ENCODE measurements at regions of chr2 and their contacts with region 1.

Region 1: GRCh38 chr2:74833418-74834233 is at the start of gene HK2:
- DNase-seq: peak; percentile 78
- H3K4me3 Mint-ChIP-seq: peak within 1 kb of the TSS; percentile 94
- H3K27ac Mint-ChIP-seq: peak within 1 kb of the TSS; percentile 86
- H3K4me1 Mint-ChIP-seq: peaks cover 41% of the 10 kb centered on the region
- H3K27me3 Mint-ChIP-seq: no peaks in the 10 kb centered on the region
- total RNA-seq, gene HK2: 37.9 to 38.7 TPM

Region 2: GRCh38 chr2:73284296-73285158 is 1549.1 kb before region 1 on chr2 and contains the start of gene FBXO41:
- CTCF ChIA-PET with region 1: no interaction called
- intact Hi-C with region 1: loop called (anchors 10 kb)
- DNase-seq: peak; percentile 65
- H3K4me3 Mint-ChIP-seq: peak within 1 kb of the TSS; percentile 80
- H3K27ac Mint-ChIP-seq: peak within 1 kb of the TSS; percentile 53
- H3K4me1 Mint-ChIP-seq: peaks cover 11% of the 10 kb centered on the region
- H3K27me3 Mint-ChIP-seq: peaks cover 14% of the 10 kb centered on the region
- total RNA-seq, gene FBXO41: 11.0 to 11.8 TPM

Region 3: DNA sequence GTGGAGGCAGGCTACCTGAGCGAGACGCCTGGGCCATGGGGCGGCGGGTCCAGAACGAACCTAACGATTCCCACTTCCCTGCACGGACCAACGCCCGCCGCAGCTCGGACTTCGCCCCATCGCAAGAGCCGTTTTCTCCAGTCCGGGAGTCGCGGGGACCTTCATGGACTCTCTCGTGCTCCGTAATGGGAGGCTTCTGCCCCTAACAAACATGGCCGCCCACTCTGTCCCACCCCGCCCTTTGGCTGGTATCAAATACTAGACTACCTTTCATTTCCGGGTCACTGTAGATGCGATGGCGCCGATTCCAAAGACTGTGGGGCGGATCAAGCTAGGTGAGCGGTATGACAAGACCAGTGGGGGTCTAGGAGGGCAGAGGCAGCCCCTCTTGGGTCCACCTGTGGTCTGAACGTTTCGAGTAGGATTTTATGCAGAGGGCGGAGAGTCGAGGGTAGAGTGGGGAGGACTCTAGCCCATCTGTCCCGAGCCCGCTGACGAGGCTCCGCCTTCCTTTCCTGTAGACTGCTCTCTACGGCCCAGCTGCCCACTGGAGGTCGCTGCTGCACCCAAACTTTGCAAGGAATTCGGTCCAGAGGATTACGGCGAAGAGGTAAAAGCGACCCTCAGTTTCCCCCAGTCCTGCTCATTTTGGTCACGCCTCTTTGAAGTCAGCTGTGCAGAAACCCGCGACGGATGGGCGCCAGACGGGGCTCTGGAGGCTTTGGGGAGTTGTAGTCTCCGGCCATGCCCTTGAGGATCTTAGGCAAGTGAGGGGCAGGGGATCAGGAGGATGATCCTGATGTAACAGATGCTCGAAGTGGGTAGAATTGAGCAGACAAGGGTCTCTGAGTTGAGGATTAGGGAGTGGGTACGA is 350.6 kb before region 1 on chr2 and contains the starts of genes CCDC142 and TTC31:
- CTCF ChIA-PET with region 1: no interaction called
- intact Hi-C with region 1: loop called (anchors 2 kb)
- DNase-seq: peak; percentile 97
- H3K4me3 Mint-ChIP-seq: peak within 1 kb of the TSS; percentile 93
- H3K27ac Mint-ChIP-seq: peak within 1 kb of the TSS; percentile 98
- H3K4me1 Mint-ChIP-seq: peaks cover 32% of the 10 kb centered on the region
- H3K27me3 Mint-ChIP-seq: no peaks in the 10 kb centered on the region
- total RNA-seq, gene CCDC142: 3.7 to 5.8 TPM
- total RNA-seq, gene TTC31: 29.5 to 30.6 TPM

Region 4: DNA sequence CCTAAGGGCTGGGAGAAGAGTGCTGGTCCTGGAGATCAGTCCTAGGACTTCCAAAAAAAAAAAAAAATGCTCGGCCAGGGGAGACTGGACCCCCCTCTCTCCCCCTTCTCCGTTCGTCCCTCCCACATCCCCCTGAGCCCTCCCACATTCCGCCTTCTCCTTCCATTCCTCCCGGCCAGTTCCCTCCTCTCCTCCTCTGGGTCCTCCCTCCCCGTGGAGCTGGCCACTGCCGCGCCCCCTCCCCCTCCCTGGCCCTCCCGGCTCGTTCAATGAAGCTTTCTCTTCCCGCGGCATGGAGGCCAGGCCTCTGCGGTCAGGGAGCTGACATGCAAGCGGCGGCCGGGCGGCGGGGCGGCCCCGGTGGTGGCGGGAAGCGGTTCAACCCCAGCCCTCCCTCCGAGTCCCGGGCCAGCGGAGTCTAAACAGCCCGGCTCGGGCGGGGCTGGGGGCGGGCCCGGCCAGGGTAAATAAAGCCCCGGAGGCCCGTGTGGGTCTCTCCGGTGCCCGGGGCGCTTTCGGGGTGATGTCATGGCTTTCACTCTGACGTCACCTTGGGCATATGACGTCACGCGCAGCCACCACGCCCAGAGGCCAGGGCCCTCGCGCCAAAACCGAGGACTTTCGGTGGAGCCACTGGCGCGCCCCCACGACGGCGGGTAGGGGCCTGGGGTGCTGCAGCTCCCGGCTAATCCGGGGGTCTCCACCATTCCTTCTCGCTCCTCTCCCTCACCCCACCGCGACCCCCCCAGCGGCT is 279.6 kb before region 1 on chr2 and contains the start of gene LOXL3:
- CTCF ChIA-PET with region 1: no interaction called
- intact Hi-C with region 1: loop called (anchors 2 kb)
- DNase-seq: peak; percentile 82
- H3K4me3 Mint-ChIP-seq: peak within 1 kb of the TSS; percentile 94
- H3K27ac Mint-ChIP-seq: peak within 1 kb of the TSS; percentile 88
- H3K4me1 Mint-ChIP-seq: peaks cover 4% of the 10 kb centered on the region
- H3K27me3 Mint-ChIP-seq: peaks cover 17% of the 10 kb centered on the region
- total RNA-seq, gene LOXL3: 0.35 to 0.41 TPM

Region 5: DNA sequence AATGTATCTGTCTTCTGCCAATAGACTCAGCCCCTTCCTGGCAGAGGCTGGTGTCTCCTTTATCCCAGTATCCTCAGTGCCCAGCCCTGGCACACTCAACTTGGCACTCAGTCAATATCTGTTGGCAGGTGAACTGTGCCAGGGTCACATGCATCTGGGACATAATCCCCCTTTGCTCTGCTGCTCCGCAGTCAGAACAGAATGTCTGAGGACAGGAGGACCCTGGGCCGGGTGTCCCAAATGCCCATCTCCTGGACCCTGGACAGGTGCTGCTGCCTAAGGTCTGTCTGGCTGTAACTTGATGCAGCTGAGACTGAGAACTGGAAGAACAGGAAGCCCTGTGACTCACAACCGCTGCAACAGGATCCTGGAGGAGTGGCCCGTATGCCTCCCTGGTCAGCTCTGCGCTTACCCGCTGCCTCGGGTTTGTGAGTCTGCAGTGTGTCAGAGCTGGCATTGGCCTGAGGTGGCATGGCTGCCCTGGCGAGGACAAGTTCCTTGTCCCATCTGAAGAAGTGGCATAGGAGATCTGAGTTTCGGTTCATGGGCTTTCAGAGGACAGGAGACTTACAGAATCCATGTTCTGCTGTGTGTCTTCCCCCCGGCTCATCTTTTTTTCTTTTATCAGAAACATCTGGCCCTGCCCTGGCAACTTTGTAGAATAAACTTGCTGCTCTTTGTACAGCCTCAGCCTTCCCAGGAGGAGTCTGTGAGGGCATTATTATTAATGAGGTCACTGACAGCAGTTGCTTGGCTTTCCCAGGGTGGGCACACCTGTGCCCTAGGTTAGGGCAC is 11.8 kb after region 1 on chr2:
- CTCF ChIA-PET with region 1: interaction called, 14 read pairs
- intact Hi-C with region 1: loop called (anchors 1 kb)
- DNase-seq: peak; percentile 61
- H3K4me3 Mint-ChIP-seq: no peak overlapping the region
- H3K27ac Mint-ChIP-seq: peak overlapping the region; percentile 33
- H3K4me1 Mint-ChIP-seq: peaks cover 95% of the 10 kb centered on the region
- H3K27me3 Mint-ChIP-seq: no peaks in the 10 kb centered on the region

Region 6: DNA sequence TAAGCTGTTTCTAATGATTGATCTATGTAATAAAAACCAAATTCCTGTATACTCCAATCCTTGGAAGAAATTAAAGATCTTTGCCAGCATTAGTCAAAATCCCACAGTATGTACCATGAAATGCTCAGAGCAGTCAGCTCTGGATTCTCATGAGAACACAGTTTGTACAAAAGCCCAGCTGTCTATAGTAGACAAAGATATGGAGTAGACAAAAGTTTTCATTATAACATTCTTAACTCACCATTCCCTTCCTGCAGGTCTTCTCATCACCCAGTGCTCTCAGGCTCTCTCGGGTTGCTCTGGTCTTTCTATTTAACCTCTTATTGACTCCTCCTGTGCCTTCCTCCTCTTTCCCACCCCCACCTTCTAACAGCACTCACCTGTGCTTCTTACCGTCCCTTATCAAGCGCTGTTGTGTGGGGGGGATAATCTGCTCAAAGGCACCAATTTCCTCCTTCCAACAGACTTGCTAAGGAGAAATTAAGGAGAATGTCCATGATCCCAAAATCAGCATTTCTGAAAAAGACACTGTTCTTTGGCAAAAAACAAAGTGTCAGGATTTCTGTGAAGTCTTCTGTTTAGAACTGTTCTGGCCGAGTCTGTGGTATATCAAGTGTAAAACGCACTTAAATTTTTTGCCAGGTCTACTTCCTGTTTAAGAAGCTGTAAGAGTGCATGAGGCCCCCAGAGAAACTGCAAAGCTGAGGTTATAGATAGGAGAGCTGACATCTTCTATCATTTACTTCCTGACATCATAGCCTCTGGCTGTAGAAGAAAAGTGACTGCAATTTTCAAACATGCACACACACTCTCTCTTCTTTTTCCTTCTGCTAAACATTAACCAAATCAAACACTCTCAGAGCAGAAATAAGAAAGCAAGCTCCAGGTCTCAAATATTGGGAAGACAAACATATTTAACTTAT is 583.1 kb after region 1 on chr2:
- CTCF ChIA-PET with region 1: no interaction called
- intact Hi-C with region 1: loop called (anchors 10 kb)
- DNase-seq: peak; percentile 14
- H3K4me3 Mint-ChIP-seq: peak overlapping the region; percentile 74
- H3K27ac Mint-ChIP-seq: peak overlapping the region; percentile 71
- H3K4me1 Mint-ChIP-seq: peaks cover 26% of the 10 kb centered on the region
- H3K27me3 Mint-ChIP-seq: no peaks in the 10 kb centered on the region

Measured in activated naive CD4-positive, alpha-beta T cell treated with anti-CD3 and anti-CD28 coated beads for 36 hours (primary cell).